Activated CD4-positive, alpha-beta T cell treated with anti-CD3 and anti-CD28 coated beads for 36 hours (primary cell): ENCODE measurements at regions of chr1 and their contacts with region 1.

Region 1: GRCh38 chr1:54944610-54945544 is 35.6 kb upstream of the TMEM61 start:
- DNase-seq: peak; percentile 81
- ATAC-seq: peak; percentile 90
- H3K4me3 Mint-ChIP-seq: no peak overlapping the region
- H3K27ac Mint-ChIP-seq: no peak overlapping the region
- H3K4me1 Mint-ChIP-seq: peaks cover 9% of the 10 kb centered on the region
- H3K27me3 Mint-ChIP-seq: peaks cover 5% of the 10 kb centered on the region

Region 2: GRCh38 chr1:53765657-53766056 is 1179.2 kb before region 1 on chr1:
- CTCF ChIA-PET with region 1: no interaction called
- POLR2A ChIA-PET with region 1: no interaction called
- intact Hi-C with region 1: no loop called
- DNase-seq: no peak
- ATAC-seq: peak; percentile 61
- H3K4me3 Mint-ChIP-seq: no peak overlapping the region
- H3K27ac Mint-ChIP-seq: no peak overlapping the region
- H3K4me1 Mint-ChIP-seq: peaks cover 16% of the 10 kb centered on the region
- H3K27me3 Mint-ChIP-seq: no peaks in the 10 kb centered on the region

Region 3: DNA sequence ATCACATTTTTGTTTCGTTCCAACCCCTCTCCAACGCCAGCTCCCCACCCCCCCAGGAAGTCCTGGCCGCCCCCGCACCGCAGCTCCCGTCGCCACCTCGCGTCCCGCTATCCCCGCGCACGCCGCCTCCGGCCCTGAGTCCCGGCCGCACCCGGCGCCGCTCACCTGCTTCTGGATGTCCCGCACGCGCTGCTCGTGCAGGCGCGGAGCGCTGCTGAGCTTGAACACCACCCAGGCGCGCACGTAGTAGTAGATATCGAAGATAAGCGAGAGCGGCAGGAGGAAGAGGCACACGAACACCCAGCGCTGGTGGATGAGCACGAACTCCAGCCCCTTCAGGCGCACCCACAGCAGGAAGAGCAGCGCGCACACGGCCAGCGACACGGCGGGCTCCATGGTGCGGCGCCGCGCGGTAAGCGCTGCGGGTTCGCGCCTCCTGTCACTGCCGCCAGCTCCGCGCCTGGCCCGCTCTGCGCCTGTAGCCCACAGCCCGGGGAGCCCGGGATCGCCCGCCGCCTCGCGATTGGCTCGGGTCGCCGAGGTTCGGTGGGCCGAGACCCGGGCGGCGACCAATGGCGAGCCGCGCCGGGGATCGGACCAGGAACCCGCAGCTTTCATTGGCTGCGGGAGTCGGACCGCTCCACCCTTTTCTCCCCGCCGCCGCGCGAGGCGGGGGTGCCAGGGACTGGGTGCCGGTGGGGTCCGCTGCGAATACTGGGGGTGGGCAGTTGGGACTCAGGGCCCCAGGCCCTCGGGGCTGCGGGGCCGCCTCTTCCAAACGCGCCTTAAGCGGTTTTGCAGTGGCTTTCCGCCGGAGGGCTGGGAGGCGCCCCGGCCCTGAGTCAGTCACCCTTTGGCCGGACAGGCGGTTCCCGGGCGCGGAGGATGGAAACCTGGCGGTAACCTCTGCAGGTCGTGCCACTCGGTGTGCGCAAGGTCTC is 57.9 kb before region 1 on chr1 and contains the start of gene DHCR24:
- CTCF ChIA-PET with region 1: interaction called, 11 read pairs
- POLR2A ChIA-PET with region 1: no interaction called
- intact Hi-C with region 1: no loop called
- DNase-seq: peak; percentile 88
- ATAC-seq: peak; percentile 96
- H3K4me3 Mint-ChIP-seq: peak within 1 kb of the TSS; percentile 89
- H3K27ac Mint-ChIP-seq: peak within 1 kb of the TSS; percentile 84
- H3K4me1 Mint-ChIP-seq: peaks cover 39% of the 10 kb centered on the region
- H3K27me3 Mint-ChIP-seq: peaks cover 8% of the 10 kb centered on the region
- total RNA-seq, gene DHCR24: 78.4 to 80.6 TPM

Region 4: GRCh38 chr1:54934869-54935268 is 10.0 kb before region 1 on chr1:
- CTCF ChIA-PET with region 1: interaction called, 21 read pairs
- POLR2A ChIA-PET with region 1: no interaction called
- intact Hi-C with region 1: no loop called
- DNase-seq: no peak
- ATAC-seq: no peak
- H3K4me3 Mint-ChIP-seq: no peak overlapping the region
- H3K27ac Mint-ChIP-seq: no peak overlapping the region
- H3K4me1 Mint-ChIP-seq: peaks cover 11% of the 10 kb centered on the region
- H3K27me3 Mint-ChIP-seq: peaks cover 3% of the 10 kb centered on the region

Region 5: DNA sequence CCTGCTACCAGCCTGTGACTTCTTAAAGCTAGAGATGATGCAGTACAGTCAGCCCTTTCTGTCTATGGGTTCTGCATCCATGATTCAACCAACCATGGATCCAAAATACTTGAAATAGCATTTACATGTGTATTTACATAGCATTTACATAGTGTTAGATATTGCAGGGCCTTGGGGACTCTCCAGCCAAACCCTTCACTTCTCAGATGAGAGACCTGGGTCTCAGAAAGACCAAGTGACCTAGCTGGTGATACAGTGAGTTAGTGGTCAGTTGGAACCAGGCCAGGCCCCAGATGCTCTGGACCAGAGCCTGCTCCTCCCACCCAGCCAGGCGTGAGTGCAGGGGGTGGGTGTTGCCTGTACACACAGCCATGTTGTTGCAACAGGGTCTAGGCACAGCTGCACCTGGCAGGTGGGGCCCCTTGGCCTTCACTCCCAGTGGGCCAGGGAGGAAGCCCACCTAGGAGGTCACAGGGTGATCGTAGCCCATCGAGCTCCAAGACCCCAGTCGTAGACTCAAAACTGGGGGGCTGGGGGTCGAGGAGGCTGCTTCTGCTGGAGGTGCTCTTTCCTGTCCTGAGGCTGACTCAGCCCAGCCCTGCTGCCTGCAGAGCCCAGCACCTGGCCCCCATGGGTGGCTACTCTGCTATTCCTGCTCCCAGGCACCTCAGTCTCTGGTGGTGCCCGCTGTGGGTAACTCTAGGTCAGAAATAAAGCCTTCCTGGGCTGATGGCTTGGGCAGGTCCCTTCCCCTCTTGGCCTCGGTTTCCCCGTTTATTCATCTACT is 43.2 kb after region 1 on chr1:
- CTCF ChIA-PET with region 1: interaction called, 13 read pairs
- POLR2A ChIA-PET with region 1: no interaction called
- intact Hi-C with region 1: no loop called
- DNase-seq: no peak
- ATAC-seq: no peak
- H3K4me3 Mint-ChIP-seq: no peak overlapping the region
- H3K27ac Mint-ChIP-seq: no peak overlapping the region
- H3K4me1 Mint-ChIP-seq: no peaks in the 10 kb centered on the region
- H3K27me3 Mint-ChIP-seq: peaks cover 4% of the 10 kb centered on the region

Region 6: DNA sequence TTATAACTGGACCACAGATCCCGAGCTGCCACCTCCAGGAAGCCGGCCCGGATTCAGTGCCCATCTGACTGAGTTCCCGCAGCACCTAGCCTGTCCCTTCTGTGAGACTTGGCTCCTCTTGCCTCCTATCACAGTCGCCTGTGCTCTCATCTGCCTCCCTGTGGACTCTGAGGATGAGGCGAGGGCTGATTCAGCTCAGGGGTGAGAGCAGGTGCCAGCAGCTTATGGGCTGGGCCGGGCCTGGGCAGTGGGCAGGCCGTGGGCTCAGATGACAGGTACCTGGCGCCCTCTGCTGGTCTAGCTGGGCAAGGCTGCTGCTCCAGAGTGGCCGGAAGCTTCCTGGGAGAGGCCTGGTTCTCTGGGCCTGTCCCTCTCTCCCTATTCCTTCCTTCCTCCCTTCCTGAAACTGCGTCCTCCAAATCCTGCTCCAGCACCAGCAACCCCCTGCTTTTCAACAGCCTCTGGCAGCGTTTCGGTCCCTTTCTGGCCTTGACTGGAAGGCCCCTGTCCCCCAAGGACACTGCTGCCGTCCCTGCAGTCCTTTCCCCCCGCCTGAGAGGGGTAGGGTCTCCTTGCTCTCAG is 77.2 kb after region 1 on chr1:
- CTCF ChIA-PET with region 1: interaction called, 38 read pairs
- POLR2A ChIA-PET with region 1: interaction called, 3 read pairs
- intact Hi-C with region 1: loop called (anchors 1 kb)
- DNase-seq: peak; percentile 88
- ATAC-seq: peak; percentile 99
- H3K4me3 Mint-ChIP-seq: no peak overlapping the region
- H3K27ac Mint-ChIP-seq: no peak overlapping the region
- H3K4me1 Mint-ChIP-seq: no peaks in the 10 kb centered on the region
- H3K27me3 Mint-ChIP-seq: peaks cover 3% of the 10 kb centered on the region